K562 (cell line): ENCODE measurements at regions of chr14 and their contacts with region 1.

Region 1: DNA sequence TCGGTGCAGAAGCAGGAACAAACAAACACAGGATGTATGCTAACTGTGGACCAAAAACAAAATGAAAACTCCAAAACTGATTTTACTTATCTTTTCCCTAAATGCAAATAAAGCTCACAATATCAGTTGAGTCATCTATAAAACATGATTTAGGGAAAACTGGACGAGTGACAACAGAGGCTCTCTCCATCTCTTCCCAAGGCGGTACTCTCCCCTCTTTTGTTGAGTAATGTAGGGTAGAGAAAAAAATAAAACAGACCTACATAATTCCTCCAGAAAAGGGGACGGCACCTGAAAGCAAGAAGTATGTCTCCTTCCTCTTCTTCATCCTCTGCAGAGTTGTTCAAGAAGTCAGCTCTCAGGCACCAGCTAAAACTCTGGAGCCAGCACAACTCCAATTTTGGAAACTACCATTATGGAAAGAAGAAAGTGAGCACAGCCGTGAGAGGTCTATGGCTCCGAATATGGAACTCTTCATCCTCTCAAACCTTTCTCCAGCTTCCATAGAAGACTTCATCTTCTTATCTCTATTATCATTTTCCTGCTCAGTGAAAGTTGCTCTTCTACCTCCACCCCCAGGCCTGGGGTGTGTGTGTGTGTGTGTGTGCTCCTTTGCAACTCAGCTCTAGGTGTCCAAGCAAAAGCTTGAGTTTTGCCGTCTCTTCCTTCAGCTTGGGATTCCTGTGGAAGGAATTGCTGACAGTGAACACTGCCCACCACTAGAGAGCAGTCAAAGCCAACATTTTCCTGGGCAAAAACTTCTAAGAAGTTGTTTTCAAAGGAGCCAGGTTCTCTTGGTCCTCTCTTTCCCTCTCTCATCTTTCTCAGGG is 155.4 kb downstream of the DIO2 start:
- DNase-seq: peak in 3 of 4 experiments; percentile 1 to 5 (median 2)
- ATAC-seq: no peak
- H3K4me3 ChIP-seq: no peak overlapping the region
- H3K27ac ChIP-seq: no peak overlapping the region
- H3K4me1 ChIP-seq: no peaks in the 10 kb centered on the region
- H3K27me3 ChIP-seq: no peaks in the 10 kb centered on the region
- CTCF ChIP-seq: peak in 2 of 3 experiments; percentile 30 to 37; a peak in 2 of 6 replicates
- EP300 ChIP-seq: no peak
- POLR2A ChIP-seq: no peak
- RAD21 ChIP-seq: peak; percentile 39 to 50

Region 2: DNA sequence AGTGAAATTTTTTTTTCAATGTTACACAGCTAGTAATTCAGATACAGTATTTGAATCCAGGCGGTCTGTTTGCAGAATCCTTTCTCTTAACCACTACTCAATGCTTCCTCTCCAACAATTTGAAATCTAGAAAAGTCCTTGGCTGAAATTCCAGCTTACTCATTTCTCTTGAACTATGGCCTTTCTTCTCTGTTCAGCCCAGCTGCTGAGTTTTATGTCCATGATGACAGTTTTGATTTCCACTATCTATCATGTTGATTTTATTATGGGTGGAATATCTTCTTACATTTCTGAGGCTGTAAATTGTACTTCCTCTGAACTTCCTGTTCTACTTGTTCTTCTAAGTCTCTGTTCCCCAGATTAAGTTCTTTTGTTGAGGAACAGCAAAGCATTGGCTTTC is 159.9 kb before region 1 on chr14:
- CTCF ChIA-PET with region 1: no interaction called
- POLR2A ChIA-PET with region 1: no interaction called
- in situ Hi-C with region 1: no loop called
- intact Hi-C with region 1: no loop called
- DNase-seq: no peak
- ATAC-seq: no peak
- H3K4me3 ChIP-seq: no peak overlapping the region
- H3K27ac ChIP-seq: no peak overlapping the region
- H3K4me1 ChIP-seq: no peaks in the 10 kb centered on the region
- H3K27me3 ChIP-seq: no peaks in the 10 kb centered on the region
- CTCF ChIP-seq: no peak
- EP300 ChIP-seq: no peak
- POLR2A ChIP-seq: no peak
- RAD21 ChIP-seq: no peak

Region 3: DNA sequence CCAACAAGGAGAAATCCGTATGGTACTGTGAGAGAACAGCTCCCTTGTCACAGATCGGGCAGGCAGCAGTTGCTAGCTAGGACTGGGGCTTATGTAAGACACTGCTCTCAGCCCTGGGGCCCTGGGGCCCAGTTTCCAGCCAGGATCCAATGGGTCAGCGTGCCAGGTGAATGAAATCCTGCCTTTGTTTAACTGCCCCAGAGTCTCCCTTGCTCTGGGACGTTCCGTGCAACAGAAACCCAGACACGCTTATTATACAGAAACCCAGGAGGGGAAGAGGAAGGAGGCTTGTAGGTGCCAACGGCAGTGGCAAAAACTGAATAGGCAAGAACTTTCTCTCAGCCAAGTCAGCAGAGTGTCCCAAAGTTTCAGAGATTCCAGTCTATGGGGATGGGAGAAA is 44.8 kb after region 1 on chr14:
- CTCF ChIA-PET with region 1: no interaction called
- POLR2A ChIA-PET with region 1: no interaction called
- in situ Hi-C with region 1: no loop called
- intact Hi-C with region 1: no loop called
- DNase-seq: no peak
- ATAC-seq: no peak
- H3K4me3 ChIP-seq: no peak overlapping the region
- H3K27ac ChIP-seq: no peak overlapping the region
- H3K4me1 ChIP-seq: no peaks in the 10 kb centered on the region
- H3K27me3 ChIP-seq: no peaks in the 10 kb centered on the region
- CTCF ChIP-seq: no peak
- EP300 ChIP-seq: no peak
- POLR2A ChIP-seq: no peak
- RAD21 ChIP-seq: no peak

Region 4: DNA sequence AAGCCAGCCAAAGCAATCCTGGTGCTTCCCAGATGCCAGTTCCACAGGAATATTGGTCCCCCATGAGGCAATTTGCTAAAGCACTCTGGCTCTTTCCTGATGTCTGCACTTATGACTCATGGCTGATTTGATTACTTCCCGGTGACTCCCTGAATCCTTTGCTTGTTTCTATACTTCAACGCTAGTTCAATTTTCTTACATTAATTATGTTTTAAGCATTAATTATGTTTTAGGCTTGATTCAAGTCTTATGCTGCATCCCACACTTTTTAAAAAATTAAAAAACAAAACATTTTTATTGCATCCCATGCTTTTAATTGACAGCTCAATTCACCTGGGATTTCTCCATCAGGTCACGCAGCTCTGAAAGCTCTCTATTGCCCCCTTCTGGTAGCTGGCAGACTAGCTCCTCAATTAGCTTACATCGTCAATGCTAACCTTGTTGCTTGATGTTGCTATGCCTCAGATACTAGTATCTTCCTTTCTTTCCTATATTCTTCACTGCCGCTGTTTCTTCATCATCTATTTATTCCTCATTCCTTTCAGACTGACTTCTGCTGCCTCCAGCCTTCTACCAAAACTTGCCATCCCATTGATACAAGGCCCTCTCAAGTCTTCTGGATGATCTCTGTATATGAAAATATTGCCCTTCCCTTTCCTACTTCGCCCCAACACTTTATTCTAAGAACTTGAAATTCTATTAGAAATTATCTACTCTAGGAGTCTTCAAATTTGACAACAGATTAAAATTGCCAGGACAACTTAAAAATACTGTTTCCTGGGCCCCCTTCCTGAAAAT is 931.6 kb after region 1 on chr14:
- CTCF ChIA-PET with region 1: no interaction called
- POLR2A ChIA-PET with region 1: no interaction called
- in situ Hi-C with region 1: no loop called
- intact Hi-C with region 1: loop called (anchors 5 kb)
- DNase-seq: peak; percentile 47 to 66 (median 56)
- ATAC-seq: peak; percentile 82
- H3K4me3 ChIP-seq: no peak overlapping the region
- H3K27ac ChIP-seq: no peak overlapping the region
- H3K4me1 ChIP-seq: no peaks in the 10 kb centered on the region
- H3K27me3 ChIP-seq: no peaks in the 10 kb centered on the region; a peak in 1 of 5 replicates
- CTCF ChIP-seq: peak; percentile 51 to 76 (median 72); a peak in 5 of 6 replicates
- EP300 ChIP-seq: no peak
- POLR2A ChIP-seq: no peak
- RAD21 ChIP-seq: peak; percentile 59 to 73